ENCODE measurements at regions of chr3 and their contacts with region 1.

Region 1: DNA sequence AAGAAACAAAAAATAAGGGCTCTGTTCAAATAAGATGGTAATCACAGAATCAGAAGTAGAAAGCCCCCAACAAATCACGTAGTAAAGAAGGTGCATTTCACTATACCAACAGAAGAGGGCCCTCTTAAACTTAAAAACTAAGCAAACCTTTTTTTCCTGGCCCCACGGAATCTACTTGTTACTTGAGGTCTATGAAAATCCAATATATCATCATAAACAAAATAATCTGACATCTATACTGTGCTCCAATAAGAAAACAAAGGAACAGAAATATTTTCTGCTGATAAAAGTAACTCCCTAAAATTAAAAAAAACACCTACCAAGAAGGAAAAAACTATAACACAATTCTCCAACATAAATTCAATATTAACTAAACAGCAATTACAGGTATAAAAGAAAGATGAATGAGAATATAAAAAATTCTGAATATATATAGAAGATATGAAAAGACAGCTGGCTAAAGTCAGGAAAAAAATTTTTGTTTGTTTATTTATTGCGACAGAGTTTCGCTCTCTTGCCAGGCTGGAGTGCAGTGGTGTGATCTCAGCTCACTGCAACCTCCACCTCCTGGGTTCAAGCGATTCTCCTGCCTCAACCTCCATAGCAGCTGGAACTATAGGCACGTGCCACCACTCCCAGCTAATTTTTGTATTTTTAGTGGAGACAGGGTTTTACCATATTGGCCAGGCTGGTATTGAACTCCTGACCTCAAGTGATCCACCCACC is 81.8 kb downstream of the CLASP2 start:
- DNase-seq: peak; percentile 79
- H3K4me3 ChIP-seq: no peak overlapping the region
- H3K27ac ChIP-seq: no peak overlapping the region
- H3K4me1 ChIP-seq: no peaks in the 10 kb centered on the region
- H3K27me3 ChIP-seq: no peaks in the 10 kb centered on the region

Region 2: DNA sequence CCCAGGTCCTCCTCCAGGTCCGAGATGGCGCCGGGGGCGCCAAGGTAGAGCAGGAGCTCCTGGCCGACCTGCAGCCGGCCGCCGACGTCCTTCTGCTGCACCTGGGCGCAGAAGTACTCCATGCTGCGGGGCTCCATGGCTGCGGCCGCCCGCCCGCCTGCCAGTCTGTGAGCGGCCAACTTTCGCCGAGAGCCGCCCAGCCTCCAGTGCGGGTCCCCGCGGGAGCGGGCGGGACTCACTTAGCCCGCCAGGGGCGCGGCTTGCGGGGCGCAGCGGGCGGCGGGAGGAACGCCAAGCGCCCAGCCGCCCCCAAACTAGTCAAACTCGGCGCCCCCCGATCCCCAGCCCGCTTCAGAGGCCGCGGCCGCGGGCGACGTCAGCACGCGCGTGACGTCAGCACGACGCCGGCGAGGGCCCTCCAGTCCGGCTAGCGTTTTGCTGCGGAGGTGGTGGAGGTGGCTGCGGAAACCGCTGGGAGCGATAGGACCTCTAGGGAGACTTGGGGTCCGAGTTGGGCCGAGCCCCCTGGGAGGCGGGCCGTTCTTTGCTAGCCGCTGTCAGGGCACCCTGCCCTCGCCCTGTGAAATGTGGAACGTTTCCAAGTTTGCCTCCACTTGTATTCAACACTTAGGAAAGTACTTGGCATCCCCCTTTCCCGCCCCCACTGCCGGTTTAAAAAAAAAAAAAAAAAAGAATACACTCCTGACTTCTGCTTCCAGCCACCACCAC is 81.7 kb after region 1 on chr3 and contains the start of gene CLASP2:
- in situ Hi-C with region 1: loop called (anchors 10 kb)
- DNase-seq: peak; percentile 95
- H3K4me3 ChIP-seq: peak within 1 kb of the TSS; percentile 86
- H3K27ac ChIP-seq: peak within 1 kb of the TSS; percentile 89
- H3K4me1 ChIP-seq: peaks cover 19% of the 10 kb centered on the region
- H3K27me3 ChIP-seq: no peaks in the 10 kb centered on the region
- total RNA-seq, gene CLASP2: 30.4 and 45.9 TPM in 2 replicates

Region 3: DNA sequence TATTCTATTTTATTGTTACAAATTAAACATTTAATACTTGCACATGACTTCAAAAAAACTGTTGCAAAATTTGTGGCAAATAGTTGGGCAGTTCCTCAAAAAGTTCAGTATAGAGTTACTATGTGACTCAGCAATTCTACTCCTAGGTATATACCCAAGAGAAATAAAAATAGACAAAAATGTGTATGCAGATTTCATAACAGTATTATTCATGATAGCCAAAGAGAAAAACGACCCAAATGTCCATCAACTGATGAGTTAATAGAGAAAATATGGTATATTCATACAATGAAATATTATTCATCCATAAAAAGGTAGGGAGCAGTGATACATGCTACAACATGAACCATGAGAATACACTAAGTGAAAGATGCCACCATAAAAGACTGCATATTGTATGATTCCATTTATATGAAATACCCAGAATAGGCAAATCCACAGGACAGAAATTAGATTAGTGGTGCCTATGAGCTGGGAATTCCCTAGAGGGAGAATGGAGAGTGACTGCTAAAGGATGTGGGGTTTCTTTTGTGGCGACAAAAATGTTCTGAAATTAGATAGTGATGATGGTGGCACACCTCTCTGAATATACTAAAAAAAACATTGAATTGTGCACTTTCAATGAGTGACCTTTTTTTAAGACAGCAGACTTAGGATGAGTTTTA is 113.4 kb after region 1 on chr3:
- in situ Hi-C with region 1: no loop called
- DNase-seq: peak; percentile 53
- H3K4me3 ChIP-seq: no peak overlapping the region
- H3K27ac ChIP-seq: no peak overlapping the region
- H3K4me1 ChIP-seq: peaks cover 8% of the 10 kb centered on the region; the same call in 1 of the 2 replicates
- H3K27me3 ChIP-seq: no peaks in the 10 kb centered on the region

Region 4: GRCh38 chr3:33787328-33788009 is 151.2 kb after region 1 on chr3:
- in situ Hi-C with region 1: loop called (anchors 10 kb)
- DNase-seq: peak; percentile 81
- H3K4me3 ChIP-seq: peak overlapping the region; percentile 54
- H3K27ac ChIP-seq: no peak overlapping the region
- H3K4me1 ChIP-seq: no peaks in the 10 kb centered on the region
- H3K27me3 ChIP-seq: no peaks in the 10 kb centered on the region

Region 5: GRCh38 chr3:34174740-34175139 is 538.5 kb after region 1 on chr3:
- in situ Hi-C with region 1: no loop called
- DNase-seq: no peak
- H3K4me3 ChIP-seq: no peak overlapping the region
- H3K27ac ChIP-seq: no peak overlapping the region
- H3K4me1 ChIP-seq: no peaks in the 10 kb centered on the region
- H3K27me3 ChIP-seq: no peaks in the 10 kb centered on the region

Region 6: GRCh38 chr3:34196918-34197317 is 560.6 kb after region 1 on chr3:
- in situ Hi-C with region 1: no loop called
- DNase-seq: no peak
- H3K4me3 ChIP-seq: no peak overlapping the region
- H3K27ac ChIP-seq: no peak overlapping the region
- H3K4me1 ChIP-seq: no peaks in the 10 kb centered on the region
- H3K27me3 ChIP-seq: no peaks in the 10 kb centered on the region

Measured in GM23248 (cell line).